GM12878 (cell line): ENCODE measurements at regions of chrX and their contacts with region 1.

Region 1: DNA sequence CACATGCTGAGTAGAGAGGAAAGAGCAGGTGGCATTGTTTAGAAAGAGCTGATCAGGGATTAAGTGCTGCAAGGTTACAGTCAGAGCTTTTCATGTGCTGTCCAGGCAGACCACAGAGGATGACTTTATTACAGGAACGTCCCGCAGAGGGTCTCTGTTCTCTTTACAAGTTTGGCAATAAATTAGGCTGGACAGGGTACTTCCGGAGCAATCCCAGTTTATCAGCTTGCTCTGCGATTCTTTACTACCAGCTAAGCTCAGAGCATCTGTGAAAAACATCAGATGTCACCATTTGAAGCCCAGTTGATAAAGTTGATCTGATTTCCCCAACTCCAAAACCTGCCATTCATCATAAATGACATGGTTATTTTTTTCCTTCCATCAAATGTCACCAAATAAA is 633.1 kb downstream of the NLGN4X start:
- DNase-seq: no peak
- ATAC-seq: no peak
- H3K4me3 ChIP-seq: no peak overlapping the region
- H3K27ac ChIP-seq: no peak overlapping the region
- H3K4me1 ChIP-seq: no peaks in the 10 kb centered on the region
- H3K27me3 ChIP-seq: no peaks in the 10 kb centered on the region
- CTCF ChIP-seq: no peak
- EP300 ChIP-seq: no peak
- POLR2A ChIP-seq: no peak
- RAD21 ChIP-seq: no peak

Region 2: DNA sequence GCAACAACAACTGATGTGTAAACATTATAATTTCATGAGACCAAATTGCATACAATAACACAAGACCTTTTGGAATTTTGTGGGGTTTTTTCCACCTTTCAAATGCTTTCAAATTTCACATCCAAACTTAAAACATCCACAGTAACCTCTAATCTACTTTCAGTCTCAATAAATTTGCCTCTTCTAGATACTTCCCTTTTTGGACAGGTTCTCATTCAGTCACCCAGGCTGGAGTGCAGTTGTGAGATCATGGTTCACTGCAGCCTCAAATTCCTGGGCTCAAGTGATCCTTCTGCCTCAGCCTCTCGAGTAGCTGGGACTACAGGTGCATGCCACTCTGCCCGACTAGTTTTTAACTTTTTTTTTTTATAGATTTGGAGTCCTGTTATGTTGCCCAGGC is 76.5 kb after region 1 on chrX:
- CTCF ChIA-PET with region 1: no interaction called
- POLR2A ChIA-PET with region 1: no interaction called
- RAD21 ChIA-PET with region 1: no interaction called
- SMC1A ChIA-PET with region 1: no interaction called
- in situ Hi-C with region 1: loop called (anchors 10 kb)
- intact Hi-C with region 1: no loop called
- DNase-seq: no peak
- ATAC-seq: no peak
- H3K4me3 ChIP-seq: no peak overlapping the region
- H3K27ac ChIP-seq: no peak overlapping the region
- H3K4me1 ChIP-seq: no peaks in the 10 kb centered on the region
- H3K27me3 ChIP-seq: no peaks in the 10 kb centered on the region
- CTCF ChIP-seq: no peak
- EP300 ChIP-seq: no peak
- POLR2A ChIP-seq: no peak
- RAD21 ChIP-seq: no peak